Activated CD4-positive, alpha-beta T cell treated with anti-CD3 and anti-CD28 coated beads, Interleukin-2, amount 10 ng/mL, durations not matched to agents 24 days and 14 days (primary cell): ENCODE measurements at regions of chr5 and their contacts with region 1.

Region 1: DNA sequence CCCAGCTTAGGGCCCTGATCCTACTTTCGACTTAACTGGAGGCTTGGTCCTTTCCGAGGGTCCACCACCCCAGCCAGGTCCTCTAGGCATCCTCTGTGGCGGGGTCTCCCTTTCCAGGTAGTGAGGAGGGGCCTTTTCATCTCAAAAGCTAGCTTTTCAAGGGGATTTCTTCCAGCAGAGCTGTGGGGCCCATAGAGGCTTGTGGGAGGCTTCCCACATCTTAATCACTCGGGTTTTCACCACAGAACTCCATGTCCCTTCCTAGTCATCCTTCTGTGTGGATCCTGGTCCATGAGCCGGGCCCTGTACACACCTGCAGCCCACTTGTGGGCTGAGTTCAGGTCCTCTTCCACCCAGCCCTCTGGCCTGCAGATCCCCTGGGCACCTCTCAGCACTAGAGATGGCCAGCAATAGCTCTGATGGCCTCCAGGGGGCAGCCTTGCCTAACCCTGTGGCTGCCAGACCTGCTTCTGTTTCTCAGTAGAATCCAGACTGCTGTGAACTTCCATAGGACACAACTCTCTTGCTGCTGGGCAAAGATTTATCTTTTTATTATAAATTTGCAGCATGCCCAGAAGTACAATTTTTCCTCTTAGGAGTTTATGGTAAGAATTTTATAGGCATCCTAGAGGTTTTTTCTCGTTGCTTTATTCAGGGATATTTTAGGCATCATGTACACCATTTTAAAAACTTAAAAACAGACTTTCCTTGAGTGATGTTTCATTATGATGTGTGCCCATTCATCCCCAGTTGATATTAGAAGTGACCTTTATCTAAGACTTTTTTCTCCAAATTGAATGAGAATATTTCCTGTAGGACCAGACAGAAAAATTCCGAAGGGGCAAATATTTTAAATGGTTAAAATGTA is 208.9 kb downstream of the TRIO start:
- DNase-seq: peak; percentile 88
- H3K4me3 Mint-ChIP-seq: no peak overlapping the region
- H3K27ac Mint-ChIP-seq: no peak overlapping the region
- H3K4me1 Mint-ChIP-seq: peaks cover 2% of the 10 kb centered on the region
- H3K27me3 Mint-ChIP-seq: peaks cover 2% of the 10 kb centered on the region

Region 2: GRCh38 chr5:14644623-14645237 is 292.7 kb after region 1 on chr5:
- intact Hi-C with region 1: loop called (anchors 1 kb)
- DNase-seq: no peak
- H3K4me3 Mint-ChIP-seq: no peak overlapping the region
- H3K27ac Mint-ChIP-seq: no peak overlapping the region
- H3K4me1 Mint-ChIP-seq: peaks cover 5% of the 10 kb centered on the region
- H3K27me3 Mint-ChIP-seq: peaks cover 30% of the 10 kb centered on the region

Region 3: DNA sequence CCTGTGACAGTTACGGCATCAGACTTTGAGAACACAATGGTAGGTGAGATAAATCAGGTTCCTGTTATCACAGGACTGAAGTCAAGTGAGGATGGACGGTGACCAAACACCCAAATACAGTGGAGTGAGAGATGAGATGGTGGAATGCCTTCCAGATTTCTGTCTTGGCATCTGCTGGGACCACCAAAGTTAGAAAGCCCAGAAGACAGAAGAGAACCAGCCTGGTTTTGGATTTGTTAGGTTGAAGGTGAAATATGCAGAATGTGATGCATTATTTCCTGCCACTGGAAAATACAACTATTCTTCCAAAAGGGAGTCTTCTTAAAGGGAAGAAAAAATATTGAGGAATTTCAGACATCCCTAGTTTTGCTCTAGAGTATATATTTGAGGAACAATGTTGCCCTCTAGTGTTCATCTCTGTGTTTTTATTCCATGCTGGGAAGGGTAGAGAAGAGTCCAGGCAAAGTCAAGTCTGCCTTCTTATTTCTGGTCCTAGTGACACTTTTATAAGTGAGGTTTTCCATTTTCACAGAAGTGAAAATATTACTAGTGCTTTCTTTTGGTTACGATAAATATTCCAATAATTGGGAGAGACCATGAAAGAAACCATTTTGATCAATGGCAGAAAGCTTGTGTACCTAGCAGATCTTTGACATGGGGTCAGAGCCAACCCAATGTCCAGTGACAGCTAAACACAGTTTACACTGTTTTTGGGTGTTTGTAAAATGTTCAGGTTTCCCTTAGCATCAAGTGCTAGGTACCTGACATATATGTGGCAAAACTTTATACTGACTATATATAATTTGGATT is 661.8 kb after region 1 on chr5:
- intact Hi-C with region 1: loop called (anchors 2 kb)
- DNase-seq: peak; percentile 60
- H3K4me3 Mint-ChIP-seq: no peak overlapping the region
- H3K27ac Mint-ChIP-seq: no peak overlapping the region
- H3K4me1 Mint-ChIP-seq: no peaks in the 10 kb centered on the region
- H3K27me3 Mint-ChIP-seq: peaks cover 4% of the 10 kb centered on the region